ENCODE measurements at regions of chr9 and their contacts with region 1.

Region 1: DNA sequence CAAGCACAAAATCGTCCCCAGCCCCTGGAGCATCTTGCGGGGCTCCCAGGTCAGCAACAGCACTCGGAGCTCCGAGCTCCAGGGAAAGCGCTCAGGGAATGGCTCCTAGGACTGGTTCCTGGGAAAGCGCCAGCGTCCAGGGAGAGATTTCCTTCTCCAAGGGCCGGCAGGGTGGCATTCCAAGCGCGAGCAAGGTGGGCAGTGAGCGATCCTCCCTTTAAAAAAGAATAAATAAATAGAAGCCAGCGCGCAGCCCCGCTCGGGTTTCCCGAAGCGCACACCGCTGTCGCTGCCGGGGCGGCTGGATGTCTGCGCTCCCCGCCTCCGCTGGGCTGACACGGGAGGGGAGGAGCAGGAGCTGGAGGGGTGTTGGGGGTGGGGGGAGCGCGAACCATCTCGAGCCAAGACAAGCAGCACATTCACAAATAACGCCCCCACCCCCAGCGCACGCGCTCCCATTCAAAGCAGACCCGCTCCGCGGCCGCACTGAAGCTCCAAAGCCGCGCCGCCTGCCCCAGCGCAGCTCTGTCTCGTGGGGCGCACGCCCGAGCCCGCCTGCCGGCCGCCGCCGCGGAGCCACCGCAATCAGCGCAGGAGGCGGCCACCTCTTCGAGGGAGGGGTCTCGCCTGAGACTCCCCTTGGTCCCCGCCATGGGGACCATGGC is 327.4 kb downstream of the SH3GL2 start:
- DNase-seq: peak in 1 of 2 donors; percentile 65
- H3K4me3 ChIP-seq: peak overlapping the region; percentile 62 to 78
- H3K27ac ChIP-seq: peak overlapping the region; percentile 88 to 95
- H3K4me1 ChIP-seq: peaks cover 4% of the 10 kb centered on the region in 2 donors
- H3K27me3 ChIP-seq: no peaks in the 10 kb centered on the region
- CTCF ChIP-seq: no peak

Region 2: DNA sequence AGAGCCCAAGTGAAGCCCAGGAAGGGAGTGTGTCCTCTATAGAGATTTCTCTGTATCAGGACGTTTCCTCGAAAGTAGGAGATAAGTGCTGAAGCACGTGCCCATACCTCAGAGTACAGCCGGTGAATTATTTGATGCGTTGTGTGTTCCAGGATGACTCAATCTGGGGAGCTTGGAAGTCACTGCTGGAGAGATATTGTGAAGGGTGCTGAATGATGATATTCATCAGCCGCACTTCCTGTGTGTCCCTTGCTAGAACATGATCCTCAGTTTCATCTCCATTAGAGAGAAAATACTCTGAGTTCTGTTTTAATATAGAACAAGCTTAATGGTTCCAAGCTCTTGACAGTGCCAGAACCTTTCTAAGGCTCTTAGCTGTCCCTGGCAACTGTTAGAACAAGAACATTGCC is 165.3 kb after region 1 on chr9:
- intact Hi-C with region 1: loop called (anchors 10 kb)
- DNase-seq: no peak
- H3K4me3 ChIP-seq: no peak overlapping the region
- H3K27ac ChIP-seq: peak overlapping the region; percentile 19 to 45
- H3K4me1 ChIP-seq: peaks cover 0 to 6% of the 10 kb centered on the region in 2 donors
- H3K27me3 ChIP-seq: no peaks in the 10 kb centered on the region
- CTCF ChIP-seq: no peak